ENCODE measurements at regions of chr14 and their contacts with region 1.

Region 1: DNA sequence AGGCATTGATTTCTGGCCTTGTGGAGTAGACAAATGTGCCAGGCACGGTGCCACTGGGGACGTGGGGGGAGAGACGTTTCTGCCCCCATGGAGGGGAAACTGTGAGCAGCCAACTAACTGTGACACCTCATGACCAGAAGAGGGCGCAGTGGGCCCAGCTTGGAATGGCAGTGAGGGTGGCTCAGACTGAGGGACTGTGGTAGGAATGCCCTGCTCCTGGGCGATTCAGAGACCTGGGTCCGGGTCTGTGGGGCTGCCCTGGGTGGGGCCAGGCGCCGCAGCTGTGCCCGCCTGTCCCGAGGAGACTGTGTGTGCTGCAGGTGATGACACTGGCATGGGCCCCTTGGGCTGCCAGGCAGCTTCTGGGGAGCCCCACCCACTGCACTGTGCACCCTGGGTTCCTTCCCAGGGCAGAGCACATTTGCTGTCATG is 60.6 kb downstream of the SLC25A47 start:
- DNase-seq: peak; percentile 77
- H3K4me3 Mint-ChIP-seq: no peak overlapping the region
- H3K27ac Mint-ChIP-seq: no peak overlapping the region
- H3K4me1 Mint-ChIP-seq: peaks cover 29% of the 10 kb centered on the region
- H3K27me3 Mint-ChIP-seq: no peaks in the 10 kb centered on the region
- CTCF ChIP-seq: peak; percentile 69

Region 2: DNA sequence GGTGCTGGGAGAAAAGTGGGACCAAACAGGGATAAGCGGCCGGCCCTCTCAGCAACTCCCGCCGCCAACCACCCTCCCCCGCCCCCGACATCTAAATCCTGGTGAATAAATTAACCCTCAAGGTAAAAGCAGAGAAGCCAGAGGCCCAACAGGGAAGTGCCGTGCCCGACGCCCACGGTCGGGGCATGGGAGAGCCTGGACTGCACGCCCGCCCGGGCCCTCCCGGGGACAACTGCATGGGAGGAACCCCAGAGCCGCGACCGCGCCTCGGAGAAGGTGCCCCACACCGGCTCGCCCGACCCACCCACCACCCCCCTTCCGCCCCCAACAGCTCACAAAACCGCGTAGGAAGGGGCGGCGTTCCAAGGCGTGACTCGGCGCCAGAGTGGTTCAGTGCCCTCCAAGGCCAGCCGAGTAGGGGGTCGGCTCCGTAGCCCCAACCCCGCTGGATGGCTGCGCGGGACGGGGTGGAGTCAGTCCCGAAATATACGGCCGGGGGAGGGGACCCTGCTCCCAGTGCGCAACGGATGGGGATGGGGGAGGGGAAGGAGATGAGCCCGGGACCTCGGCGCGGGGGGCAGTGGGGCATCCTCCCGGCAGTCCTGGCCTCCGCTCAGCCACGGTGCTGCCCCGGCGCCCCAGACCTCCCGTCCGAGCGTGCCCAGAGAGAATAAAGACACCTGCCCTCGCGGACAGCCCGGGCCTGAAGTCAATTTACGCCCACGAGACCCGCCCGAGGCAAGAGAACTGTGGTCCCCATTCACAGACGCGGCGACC is 78.2 kb before region 1 on chr14:
- CTCF ChIA-PET with region 1: interaction called, 10 read pairs
- POLR2A ChIA-PET with region 1: no interaction called
- intact Hi-C with region 1: no loop called
- DNase-seq: no peak
- H3K4me3 Mint-ChIP-seq: peak overlapping the region; percentile 87
- H3K27ac Mint-ChIP-seq: no peak overlapping the region
- H3K4me1 Mint-ChIP-seq: peaks cover 32% of the 10 kb centered on the region
- H3K27me3 Mint-ChIP-seq: no peaks in the 10 kb centered on the region
- CTCF ChIP-seq: no peak

Region 3: DNA sequence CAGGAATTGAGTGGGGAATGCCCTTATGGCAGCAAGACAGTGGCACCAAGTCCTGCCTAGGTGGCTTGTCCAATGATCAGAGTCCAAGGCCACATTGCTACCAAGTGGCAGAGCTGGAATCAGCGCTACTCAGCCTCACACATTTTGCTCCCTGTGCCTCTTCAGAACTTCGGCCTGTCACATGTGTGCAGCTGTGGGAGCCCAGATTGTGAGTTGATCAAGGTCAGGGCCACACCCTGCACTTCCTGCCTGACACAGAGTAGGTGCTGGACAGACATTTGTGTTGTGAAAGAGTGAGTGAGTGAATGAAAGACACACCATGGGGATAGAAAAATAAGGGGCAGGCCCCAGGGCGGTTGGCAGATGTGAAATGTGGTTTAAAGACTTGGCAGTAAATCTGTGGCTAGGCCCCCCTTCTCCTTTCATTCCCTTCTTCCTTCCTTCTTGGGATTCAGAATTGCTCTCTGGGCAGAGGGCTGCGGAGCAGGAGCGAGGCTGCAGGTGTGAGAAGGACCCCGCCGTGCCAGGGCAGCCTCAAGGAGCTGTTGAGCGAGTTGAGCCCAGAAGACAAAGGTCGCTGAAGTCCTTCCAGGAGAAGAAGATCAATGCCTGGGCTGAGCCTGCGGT is 22.9 kb after region 1 on chr14:
- CTCF ChIA-PET with region 1: interaction called, 17 read pairs
- POLR2A ChIA-PET with region 1: interaction called, 4 read pairs
- intact Hi-C with region 1: no loop called
- DNase-seq: peak; percentile 81
- H3K4me3 Mint-ChIP-seq: no peak overlapping the region
- H3K27ac Mint-ChIP-seq: peak overlapping the region; percentile 79
- H3K4me1 Mint-ChIP-seq: peaks cover 40% of the 10 kb centered on the region
- H3K27me3 Mint-ChIP-seq: no peaks in the 10 kb centered on the region
- CTCF ChIP-seq: no peak

Region 4: DNA sequence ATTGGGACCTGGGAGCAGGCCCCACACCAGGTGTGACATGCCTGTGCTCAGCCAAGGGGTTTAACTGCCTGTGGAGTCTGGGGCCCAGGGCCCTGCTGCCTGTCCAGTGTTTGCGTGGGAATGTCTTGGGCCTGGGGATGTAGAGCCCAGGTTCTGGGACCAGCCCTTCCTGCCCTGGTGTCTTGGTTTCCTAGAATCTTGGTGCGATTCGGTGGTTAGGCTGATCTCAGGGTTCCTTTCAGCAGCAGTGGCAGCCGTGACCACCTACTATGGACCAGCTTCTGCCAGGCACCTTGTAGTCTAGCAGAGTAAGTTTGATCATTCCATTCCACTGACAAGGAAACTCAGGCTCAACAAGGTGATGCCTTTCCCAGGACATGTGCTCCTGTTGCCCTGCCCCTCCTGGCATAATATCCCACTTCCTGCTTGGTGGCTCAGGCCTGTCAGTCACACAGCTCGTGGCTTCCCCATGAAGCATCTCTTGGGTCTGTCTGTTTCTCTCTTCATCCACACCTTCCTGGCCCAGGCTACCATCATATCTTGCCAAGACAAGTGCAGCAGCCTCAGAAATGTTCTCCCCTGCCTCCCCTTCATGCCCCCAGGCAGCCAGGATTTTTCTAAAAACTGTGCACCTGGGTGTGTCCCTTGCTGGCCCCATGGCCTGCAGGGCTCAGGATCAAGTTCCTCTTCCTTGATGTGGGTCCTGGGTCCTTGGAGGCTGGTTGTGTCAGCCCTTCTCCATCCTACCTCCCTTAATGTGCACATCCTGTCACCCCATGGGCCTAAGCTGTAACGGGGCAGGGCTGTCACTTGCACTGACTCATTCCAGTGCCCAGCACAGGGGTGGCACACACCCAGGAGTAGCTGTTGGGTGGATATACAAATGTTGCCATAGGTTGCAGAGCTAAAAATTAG is 41.0 kb after region 1 on chr14:
- CTCF ChIA-PET with region 1: interaction called, 17 read pairs
- POLR2A ChIA-PET with region 1: no interaction called
- intact Hi-C with region 1: no loop called
- DNase-seq: peak; percentile 18
- H3K4me3 Mint-ChIP-seq: no peak overlapping the region
- H3K27ac Mint-ChIP-seq: peak overlapping the region; percentile 36
- H3K4me1 Mint-ChIP-seq: peaks cover 25% of the 10 kb centered on the region
- H3K27me3 Mint-ChIP-seq: no peaks in the 10 kb centered on the region
- CTCF ChIP-seq: no peak

Region 5: DNA sequence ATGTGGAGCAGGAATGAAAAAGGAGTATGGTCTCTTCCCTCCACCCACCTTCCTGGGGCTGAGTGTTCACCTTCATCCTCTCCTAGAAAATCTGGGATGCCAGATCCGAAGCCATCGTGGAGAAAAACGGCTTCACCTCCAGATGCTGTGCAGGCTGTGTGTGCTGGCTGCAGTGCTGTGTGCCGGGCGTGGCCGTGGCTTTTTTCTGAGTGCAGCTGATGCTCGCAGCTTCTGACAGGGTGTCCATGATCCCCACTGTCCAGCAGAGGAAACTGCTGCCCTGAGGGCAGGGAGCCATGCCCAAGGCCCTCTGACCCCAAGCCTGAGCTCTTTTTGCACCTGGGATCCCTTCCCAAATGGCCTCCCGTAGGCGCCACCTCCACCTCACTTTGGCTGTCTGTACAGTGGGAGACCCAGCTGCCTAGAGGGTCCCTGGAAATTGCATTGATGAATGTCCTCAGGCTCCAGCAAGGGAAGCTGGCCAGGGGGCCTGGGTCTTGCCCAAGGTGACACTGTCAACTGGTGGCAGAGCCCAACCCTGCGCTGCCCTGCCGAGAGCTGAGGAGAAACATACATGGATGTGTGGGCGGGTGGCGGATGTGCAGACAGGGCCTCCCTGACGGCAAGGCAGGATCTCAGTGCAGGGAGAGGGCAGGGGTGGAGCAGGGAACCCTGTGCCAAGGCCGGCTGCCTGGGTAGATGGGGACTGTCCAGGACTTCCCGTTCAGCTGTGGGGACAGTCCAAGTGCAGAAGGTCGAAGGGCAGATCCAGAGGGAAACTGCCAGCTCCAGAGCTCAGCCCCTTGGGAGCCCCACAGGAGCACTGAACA is 150.1 kb after region 1 on chr14:
- CTCF ChIA-PET with region 1: interaction called, 3 read pairs
- POLR2A ChIA-PET with region 1: no interaction called
- intact Hi-C with region 1: loop called (anchors 10 kb)
- DNase-seq: no peak
- H3K4me3 Mint-ChIP-seq: no peak overlapping the region
- H3K27ac Mint-ChIP-seq: no peak overlapping the region
- H3K4me1 Mint-ChIP-seq: peaks cover 10% of the 10 kb centered on the region
- H3K27me3 Mint-ChIP-seq: no peaks in the 10 kb centered on the region
- CTCF ChIP-seq: no peak

Region 6: GRCh38 chr14:100654814-100655740 is 271.3 kb after region 1 on chr14:
- CTCF ChIA-PET with region 1: interaction called, 12 read pairs
- POLR2A ChIA-PET with region 1: no interaction called
- intact Hi-C with region 1: no loop called
- DNase-seq: no peak
- H3K4me3 Mint-ChIP-seq: no peak overlapping the region
- H3K27ac Mint-ChIP-seq: no peak overlapping the region
- H3K4me1 Mint-ChIP-seq: no peaks in the 10 kb centered on the region
- H3K27me3 Mint-ChIP-seq: peaks cover 11% of the 10 kb centered on the region
- CTCF ChIP-seq: peak; percentile 52

Measured in MCF 10A (cell line).